GM10248 (cell line): ENCODE measurements at regions of chr1 and their contacts with region 1.

Region 1: DNA sequence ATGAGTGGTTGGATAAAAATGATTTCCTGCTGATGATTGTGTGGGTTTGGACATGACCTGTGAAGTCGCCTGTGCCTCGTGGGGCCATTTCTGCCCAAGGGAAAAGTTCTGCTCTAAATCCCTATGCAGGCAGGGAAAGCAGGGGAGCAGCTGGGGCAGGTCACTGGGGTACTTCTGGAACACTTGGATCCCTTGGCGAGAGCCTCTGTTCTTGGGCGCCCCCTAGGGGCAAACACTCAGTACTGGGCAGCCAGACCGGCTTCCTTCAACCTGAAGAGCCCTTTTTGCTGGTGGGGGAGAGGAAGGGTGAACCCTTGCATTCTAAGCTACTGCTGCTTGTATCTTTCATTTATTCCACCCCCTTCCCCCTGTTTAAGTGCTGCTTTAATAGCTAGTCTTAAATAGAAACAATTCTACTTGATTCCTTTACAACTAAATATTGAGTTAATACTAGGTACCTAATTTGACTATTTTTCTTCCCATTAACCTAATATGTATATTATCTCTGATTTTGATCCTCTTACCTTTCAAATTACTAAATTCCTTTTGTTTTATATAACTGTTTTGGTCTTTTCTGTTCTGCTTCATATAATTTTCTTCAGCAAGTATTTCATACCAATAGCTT is 5.1 kb upstream of the CLEC20A start:
- DNase-seq: peak; percentile 85
- CTCF ChIP-seq: peak; percentile 79

Region 2: GRCh38 chr1:177729646-177730045 is 772.2 kb before region 1 on chr1:
- CTCF ChIA-PET with region 1: no interaction called
- POLR2A ChIA-PET with region 1: no interaction called
- DNase-seq: no peak
- CTCF ChIP-seq: no peak

Region 3: GRCh38 chr1:177948336-177948972 is 553.4 kb before region 1 on chr1:
- CTCF ChIA-PET with region 1: no interaction called
- POLR2A ChIA-PET with region 1: no interaction called
- DNase-seq: peak; percentile 52
- CTCF ChIP-seq: peak; percentile 80

Region 4: DNA sequence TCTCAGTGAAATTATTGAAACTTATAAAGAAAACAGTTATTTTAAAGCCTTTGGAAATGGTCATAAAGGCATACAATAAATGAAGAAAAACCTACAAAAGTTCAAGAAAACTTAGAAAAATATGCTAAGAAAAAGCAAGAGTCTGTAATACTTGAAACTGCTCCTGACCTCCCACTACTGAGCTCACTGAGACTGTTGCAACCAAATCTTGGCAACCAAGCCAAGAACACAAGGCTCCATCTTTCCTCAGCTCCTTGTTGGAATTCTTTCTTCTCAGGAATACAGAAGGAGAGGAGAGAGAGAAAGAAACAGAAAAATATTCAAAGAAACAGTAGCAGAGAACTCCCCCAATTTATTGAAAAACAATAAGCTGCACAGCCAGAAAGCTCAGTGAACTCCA is 247.4 kb before region 1 on chr1:
- CTCF ChIA-PET with region 1: no interaction called
- POLR2A ChIA-PET with region 1: no interaction called
- DNase-seq: no peak
- CTCF ChIP-seq: no peak

Region 5: GRCh38 chr1:178282949-178283367 is 218.9 kb before region 1 on chr1:
- CTCF ChIA-PET with region 1: no interaction called
- POLR2A ChIA-PET with region 1: no interaction called
- DNase-seq: no peak
- CTCF ChIP-seq: no peak

Region 6: DNA sequence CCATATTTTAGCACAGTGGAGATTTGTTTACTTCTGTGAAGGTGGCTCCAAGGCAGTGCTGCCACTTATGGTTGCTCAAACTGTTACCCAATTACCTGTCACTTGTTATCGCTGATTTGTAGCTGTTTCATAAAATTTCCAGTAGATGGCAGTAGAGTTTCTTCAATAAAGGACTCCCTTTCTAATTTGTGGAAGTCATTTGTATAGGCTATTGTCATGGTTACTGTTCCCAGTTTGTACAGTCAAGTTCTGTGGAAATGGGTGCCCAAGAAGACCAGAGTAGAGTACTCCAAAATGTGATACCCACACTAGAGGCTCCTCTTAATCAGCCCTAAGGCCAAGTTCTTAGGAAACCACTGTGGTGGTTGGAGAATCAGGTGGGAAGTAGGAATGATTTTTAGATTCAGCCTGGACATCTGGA is 191.1 kb before region 1 on chr1:
- CTCF ChIA-PET with region 1: interaction called, 66 read pairs
- POLR2A ChIA-PET with region 1: no interaction called
- DNase-seq: peak; percentile 32
- CTCF ChIP-seq: peak; percentile 55

Region 7: DNA sequence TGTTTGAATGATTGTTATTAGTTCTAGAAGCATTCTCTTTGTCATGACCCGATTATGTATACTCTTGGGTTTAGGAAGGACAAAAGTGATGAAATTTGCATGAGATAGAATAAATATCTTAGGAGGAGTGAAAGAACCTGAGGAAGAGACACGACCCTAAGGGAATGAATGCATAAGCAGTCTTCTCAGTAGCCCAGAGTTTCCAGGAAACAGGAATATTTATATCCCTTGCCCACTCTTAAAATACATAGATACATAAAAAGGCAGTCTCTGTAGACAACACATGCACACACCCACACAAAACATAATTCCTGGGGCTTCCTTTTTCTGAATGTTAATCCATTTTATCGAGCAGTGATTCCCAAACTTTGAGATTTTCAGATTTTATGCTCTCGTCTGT is 24.4 kb before region 1 on chr1:
- CTCF ChIA-PET with region 1: interaction called, 14 read pairs
- POLR2A ChIA-PET with region 1: no interaction called
- DNase-seq: no peak
- CTCF ChIP-seq: no peak

Region 8: DNA sequence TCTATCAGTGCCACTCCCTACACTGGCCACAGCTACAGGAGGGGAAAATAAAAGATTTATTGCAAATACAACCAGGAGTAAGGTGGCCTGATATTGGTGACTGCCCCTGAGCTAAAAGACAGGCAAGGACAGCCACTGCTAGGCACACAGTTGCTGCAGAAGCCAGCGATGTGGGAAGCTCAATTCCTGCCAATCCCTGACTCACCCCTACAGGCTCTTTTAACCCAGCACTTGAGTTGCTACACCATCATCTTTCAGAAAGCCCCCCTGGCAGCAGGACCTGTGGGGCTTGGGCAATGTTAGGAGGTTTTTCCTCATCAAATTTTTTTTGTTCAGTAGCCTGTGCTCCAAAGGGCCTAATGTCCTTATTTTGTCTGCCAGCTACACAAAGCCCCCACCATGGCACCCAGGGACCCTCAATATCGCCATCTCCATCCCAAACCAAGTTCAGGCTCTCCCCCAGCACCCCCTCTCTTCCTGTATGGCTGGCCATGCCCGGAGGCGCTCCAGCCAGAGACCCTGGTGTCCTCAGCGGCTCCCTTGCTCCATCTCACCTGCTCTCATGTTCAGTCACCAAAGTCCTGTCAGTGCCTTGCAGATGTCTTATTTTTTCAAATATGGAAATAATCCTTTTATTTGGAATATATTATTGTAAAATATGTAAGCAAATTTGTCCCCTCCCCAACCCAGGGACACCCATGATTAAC is 18.4 kb before region 1 on chr1:
- CTCF ChIA-PET with region 1: interaction called, 11 read pairs
- POLR2A ChIA-PET with region 1: no interaction called
- DNase-seq: peak; percentile 5
- CTCF ChIP-seq: no peak

Region 9: DNA sequence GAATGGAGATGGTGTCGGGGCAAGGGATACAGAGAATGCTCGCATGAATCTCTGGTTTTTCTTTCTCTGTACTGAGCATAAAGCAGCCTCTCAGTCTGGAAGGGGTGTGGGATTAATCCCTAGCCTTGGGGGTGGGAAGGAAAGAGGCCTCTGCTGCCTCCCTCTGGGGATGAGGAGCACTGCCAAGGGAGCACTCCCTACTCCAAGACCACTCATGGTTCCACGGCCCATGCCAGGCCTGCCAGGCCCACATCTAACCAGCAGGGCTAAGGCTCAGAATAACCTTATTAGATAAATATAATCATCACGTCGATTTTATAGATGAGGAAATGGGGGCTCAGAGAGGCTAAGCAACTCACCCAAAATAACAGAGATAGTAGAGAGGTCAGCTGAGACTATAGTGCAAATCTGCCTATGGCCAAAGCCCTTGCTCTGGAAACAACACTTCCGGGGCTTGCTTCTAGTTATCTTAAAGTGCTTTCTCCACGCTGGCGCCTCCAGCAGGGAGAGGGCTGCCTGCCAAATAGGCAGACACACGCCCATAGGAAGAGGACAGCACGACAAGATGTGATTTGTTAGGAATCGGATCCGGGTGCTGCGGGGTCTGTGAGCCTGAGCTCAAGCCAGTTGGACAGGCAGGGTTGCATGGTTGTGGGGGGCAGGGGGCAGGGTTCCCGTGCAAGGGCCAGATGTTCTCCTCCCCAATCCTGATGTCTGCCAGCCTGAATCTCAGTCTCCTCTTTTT is 11.6 kb after region 1 on chr1:
- CTCF ChIA-PET with region 1: interaction called, 27 read pairs
- POLR2A ChIA-PET with region 1: no interaction called
- DNase-seq: no peak
- CTCF ChIP-seq: peak; percentile 2

Region 10: GRCh38 chr1:178532392-178532791 is 30.6 kb after region 1 on chr1:
- CTCF ChIA-PET with region 1: interaction called, 12 read pairs
- POLR2A ChIA-PET with region 1: no interaction called
- DNase-seq: peak; percentile 84
- CTCF ChIP-seq: peak; percentile 95